B cell (primary cell): ENCODE measurements at regions of chr16 and their contacts with region 1.

Region 1: GRCh38 chr16:53054670-53055485 is at the start of gene CHD9:
- DNase-seq: peak; percentile 91
- ATAC-seq: peak; percentile 87
- H3K4me3 ChIP-seq: peak within 1 kb of the TSS; percentile 49 to 83 (median 78)
- H3K4me3 Mint-ChIP-seq: peak within 1 kb of the TSS; percentile 98
- H3K27ac ChIP-seq: peak within 1 kb of the TSS; percentile 65 to 82
- H3K27ac Mint-ChIP-seq: peak within 1 kb of the TSS; percentile 97
- H3K4me1 ChIP-seq: peaks cover 35 to 53% of the 10 kb centered on the region in 2 donors
- H3K4me1 Mint-ChIP-seq: peaks cover 43% of the 10 kb centered on the region
- H3K27me3 ChIP-seq: no peaks in the 10 kb centered on the region
- H3K27me3 Mint-ChIP-seq: no peaks in the 10 kb centered on the region
- CTCF ChIP-seq: peak; percentile 99
- total RNA-seq, gene CHD9: 97.5 and 102 TPM in 2 replicates

Region 2: DNA sequence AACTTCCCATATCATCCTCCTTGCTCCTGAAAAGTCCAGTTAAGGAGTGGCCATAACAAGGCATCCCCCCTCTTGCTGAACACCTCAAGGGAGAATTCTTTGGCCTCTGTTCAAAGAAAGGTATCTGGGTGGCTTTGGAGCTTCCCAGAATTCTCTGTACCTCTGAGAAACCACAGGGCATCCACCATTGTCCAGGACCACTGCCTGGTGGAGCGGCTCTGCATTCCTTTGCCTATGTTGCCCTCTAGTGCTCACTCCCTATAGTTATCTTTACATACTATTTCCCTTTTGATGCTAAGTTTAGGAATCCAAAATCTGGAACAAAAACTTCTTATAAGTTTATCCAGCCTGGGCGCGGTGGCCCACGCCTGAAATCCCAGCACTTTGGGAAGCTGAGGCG is 32.5 kb before region 1 on chr16:
- CTCF ChIA-PET with region 1: no interaction called
- POLR2A ChIA-PET with region 1: no interaction called
- intact Hi-C with region 1: no loop called
- DNase-seq: no peak
- ATAC-seq: no peak
- H3K4me3 ChIP-seq: no peak overlapping the region
- H3K4me3 Mint-ChIP-seq: no peak overlapping the region
- H3K27ac ChIP-seq: no peak overlapping the region
- H3K27ac Mint-ChIP-seq: no peak overlapping the region
- H3K4me1 ChIP-seq: no peaks in the 10 kb centered on the region
- H3K4me1 Mint-ChIP-seq: no peaks in the 10 kb centered on the region
- H3K27me3 ChIP-seq: no peaks in the 10 kb centered on the region
- H3K27me3 Mint-ChIP-seq: peaks cover 11% of the 10 kb centered on the region
- CTCF ChIP-seq: no peak

Region 3: GRCh38 chr16:53080345-53081031 is 25.6 kb after region 1 on chr16:
- CTCF ChIA-PET with region 1: interaction called, 13 read pairs
- POLR2A ChIA-PET with region 1: no interaction called
- intact Hi-C with region 1: no loop called
- DNase-seq: no peak
- ATAC-seq: no peak
- H3K4me3 ChIP-seq: no peak overlapping the region
- H3K4me3 Mint-ChIP-seq: no peak overlapping the region
- H3K27ac ChIP-seq: no peak overlapping the region
- H3K27ac Mint-ChIP-seq: no peak overlapping the region
- H3K4me1 ChIP-seq: peaks cover 0 to 12% of the 10 kb centered on the region in 2 donors
- H3K4me1 Mint-ChIP-seq: peaks cover 47% of the 10 kb centered on the region
- H3K27me3 ChIP-seq: no peaks in the 10 kb centered on the region
- H3K27me3 Mint-ChIP-seq: no peaks in the 10 kb centered on the region
- CTCF ChIP-seq: no peak

Region 4: GRCh38 chr16:53123747-53124146 is 68.9 kb after region 1 on chr16:
- CTCF ChIA-PET with region 1: interaction called, 43 read pairs
- POLR2A ChIA-PET with region 1: interaction called, 3 read pairs
- intact Hi-C with region 1: no loop called
- DNase-seq: no peak
- ATAC-seq: no peak
- H3K4me3 ChIP-seq: no peak overlapping the region
- H3K4me3 Mint-ChIP-seq: no peak overlapping the region
- H3K27ac ChIP-seq: no peak overlapping the region
- H3K27ac Mint-ChIP-seq: peak overlapping the region; percentile 43
- H3K4me1 ChIP-seq: peaks cover 10 to 11% of the 10 kb centered on the region in 2 donors
- H3K4me1 Mint-ChIP-seq: peaks cover 39% of the 10 kb centered on the region
- H3K27me3 ChIP-seq: no peaks in the 10 kb centered on the region
- H3K27me3 Mint-ChIP-seq: no peaks in the 10 kb centered on the region
- CTCF ChIP-seq: no peak

Region 5: GRCh38 chr16:53159781-53160436 is 105.0 kb after region 1 on chr16:
- CTCF ChIA-PET with region 1: interaction called, 111 read pairs
- POLR2A ChIA-PET with region 1: no interaction called
- intact Hi-C with region 1: loop called (anchors 1 kb)
- DNase-seq: peak; percentile 77
- ATAC-seq: peak; percentile 77
- H3K4me3 ChIP-seq: no peak overlapping the region
- H3K4me3 Mint-ChIP-seq: no peak overlapping the region
- H3K27ac ChIP-seq: no peak overlapping the region
- H3K27ac Mint-ChIP-seq: no peak overlapping the region
- H3K4me1 ChIP-seq: no peaks in the 10 kb centered on the region
- H3K4me1 Mint-ChIP-seq: no peaks in the 10 kb centered on the region
- H3K27me3 ChIP-seq: no peaks in the 10 kb centered on the region
- H3K27me3 Mint-ChIP-seq: no peaks in the 10 kb centered on the region
- CTCF ChIP-seq: peak; percentile 85

Region 6: GRCh38 chr16:53220585-53220984 is 165.7 kb after region 1 on chr16:
- CTCF ChIA-PET with region 1: interaction called, 37 read pairs
- POLR2A ChIA-PET with region 1: no interaction called
- intact Hi-C with region 1: loop called (anchors 1 kb)
- DNase-seq: peak; percentile 50
- ATAC-seq: peak; percentile 60
- H3K4me3 ChIP-seq: no peak overlapping the region
- H3K4me3 Mint-ChIP-seq: no peak overlapping the region
- H3K27ac ChIP-seq: peak overlapping the region; percentile 31 to 78
- H3K27ac Mint-ChIP-seq: no peak overlapping the region
- H3K4me1 ChIP-seq: peaks cover 33 to 35% of the 10 kb centered on the region in 2 donors
- H3K4me1 Mint-ChIP-seq: peaks cover 12% of the 10 kb centered on the region
- H3K27me3 ChIP-seq: no peaks in the 10 kb centered on the region
- H3K27me3 Mint-ChIP-seq: no peaks in the 10 kb centered on the region
- CTCF ChIP-seq: peak; percentile 48